Heart left ventricle (tissue), 16 donors: ENCODE measurements at regions of chr5 and their contacts with region 1.

Region 1: DNA sequence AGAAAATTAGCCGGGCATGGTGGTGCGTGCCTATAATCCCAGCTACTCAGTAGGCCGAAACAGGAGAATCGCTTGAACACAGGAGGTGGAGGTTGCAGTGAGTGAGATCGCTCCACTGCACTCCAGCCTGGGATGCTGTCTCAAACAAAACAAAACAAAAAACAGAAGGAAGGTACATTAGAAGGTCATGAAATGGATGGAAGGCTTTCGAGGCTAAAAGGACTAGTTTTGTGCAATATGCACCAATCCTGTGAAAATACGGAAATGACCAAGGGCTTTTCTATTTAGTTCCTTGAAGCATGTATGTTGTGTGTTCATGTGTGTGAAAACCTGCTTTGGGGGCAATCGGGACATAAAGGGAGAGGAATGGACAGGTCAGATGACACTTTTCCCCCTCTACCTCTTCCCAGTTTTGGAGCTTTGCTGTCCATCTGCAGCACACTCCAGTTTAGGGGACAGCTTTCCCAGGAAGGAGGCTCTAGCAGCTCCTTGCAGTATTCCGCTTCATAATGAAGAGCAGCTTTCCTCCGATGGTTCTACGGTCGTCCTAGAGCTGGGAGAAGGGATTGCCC is 15.0 kb downstream of the SPRY4 start:
- DNase-seq: no peak
- ATAC-seq: no peak
- H3K4me3 ChIP-seq: no peak overlapping the region
- H3K27ac ChIP-seq: no peak overlapping the region
- H3K4me1 ChIP-seq: peaks cover 0 to 51% (median 28%) of the 10 kb centered on the region in 12 donors
- H3K27me3 ChIP-seq: no peaks in the 10 kb centered on the region
- CTCF ChIP-seq: no peak
- POLR2A ChIP-seq: no peak

Region 2: GRCh38 chr5:142263346-142263745 is 46.5 kb before region 1 on chr5:
- intact Hi-C with region 1: loop called in 1 of 10 experiments (anchors 1 kb)
- DNase-seq: no peak
- ATAC-seq: no peak
- H3K4me3 ChIP-seq: no peak overlapping the region
- H3K27ac ChIP-seq: no peak overlapping the region
- H3K4me1 ChIP-seq: no peaks in the 10 kb centered on the region
- H3K27me3 ChIP-seq: no peaks in the 10 kb centered on the region
- CTCF ChIP-seq: no peak
- POLR2A ChIP-seq: no peak